ENCODE measurements at regions of chr15 and their contacts with region 1.

Region 1: DNA sequence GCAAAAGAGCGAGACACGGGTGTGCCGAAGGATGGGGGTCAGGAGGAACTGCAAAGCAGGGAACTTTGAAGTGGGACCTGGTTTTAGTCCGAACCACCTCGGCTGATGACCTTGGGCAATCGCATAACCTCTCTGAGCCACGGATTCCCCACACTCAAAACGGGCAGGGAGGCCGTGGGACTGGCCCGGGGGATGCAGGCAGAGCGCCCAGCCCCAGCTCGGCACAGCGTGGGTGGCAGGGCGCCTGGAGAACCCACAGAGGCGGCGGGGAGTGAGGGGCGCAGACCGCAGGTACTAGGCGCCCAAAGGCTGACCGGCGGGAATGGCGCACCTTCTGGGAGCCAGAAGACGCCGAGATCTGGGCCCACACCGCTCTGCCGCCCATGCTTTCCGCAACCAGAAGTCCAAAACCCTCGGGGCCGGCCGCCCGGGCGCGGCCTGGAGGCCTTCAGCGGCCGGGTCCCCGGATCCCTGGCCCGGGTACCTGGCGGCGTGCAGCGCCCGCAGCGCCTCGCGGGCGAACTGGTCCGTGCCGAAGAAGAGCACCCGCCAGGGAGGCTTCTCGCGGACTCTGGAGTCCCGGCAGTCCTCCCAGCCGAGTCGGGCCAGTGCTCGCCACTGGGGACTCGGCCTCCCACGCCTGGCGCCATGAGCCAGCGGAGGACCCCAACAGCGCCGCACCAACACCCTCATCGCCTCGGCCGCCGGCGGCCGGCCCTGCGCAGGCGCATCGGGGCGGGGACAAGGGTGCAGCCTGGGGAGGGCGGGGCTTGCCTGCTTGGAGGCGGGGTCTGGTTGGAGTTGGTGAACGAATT is at the start of gene MTFMT:
- DNase-seq: peak; percentile 77
- H3K4me3 ChIP-seq: peak within 1 kb of the TSS; percentile 66 to 89 (median 87)
- H3K27ac ChIP-seq: peak within 1 kb of the TSS; percentile 54
- H3K4me1 ChIP-seq: peaks cover 17% of the 10 kb centered on the region
- H3K27me3 ChIP-seq: no peaks in the 10 kb centered on the region
- CTCF ChIP-seq: peak in 1 of 2 donors; percentile 17
- total RNA-seq, gene MTFMT: 22.5 to 27.2 TPM

Region 2: GRCh38 chr15:65049418-65049840 is 20.3 kb after region 1 on chr15:
- CTCF ChIA-PET with region 1: interaction called, 15 read pairs
- dilution Hi-C with region 1: no loop called
- in situ Hi-C with region 1: no loop called
- intact Hi-C with region 1: loop called (anchors 1 kb)
- DNase-seq: peak; percentile 89
- H3K4me3 ChIP-seq: peak overlapping the region; percentile 11 to 45 (median 40)
- H3K27ac ChIP-seq: no peak overlapping the region
- H3K4me1 ChIP-seq: peaks cover 11% of the 10 kb centered on the region
- H3K27me3 ChIP-seq: no peaks in the 10 kb centered on the region
- CTCF ChIP-seq: no peak

Region 3: GRCh38 chr15:65086017-65086679 is 57.0 kb after region 1 on chr15:
- CTCF ChIA-PET with region 1: no interaction called
- dilution Hi-C with region 1: no loop called
- in situ Hi-C with region 1: no loop called
- intact Hi-C with region 1: loop called (anchors 1 kb)
- DNase-seq: peak; percentile 44
- H3K4me3 ChIP-seq: no peak overlapping the region
- H3K27ac ChIP-seq: no peak overlapping the region
- H3K4me1 ChIP-seq: peaks cover 37% of the 10 kb centered on the region
- H3K27me3 ChIP-seq: no peaks in the 10 kb centered on the region
- CTCF ChIP-seq: peak; percentile 64 to 69

Region 4: DNA sequence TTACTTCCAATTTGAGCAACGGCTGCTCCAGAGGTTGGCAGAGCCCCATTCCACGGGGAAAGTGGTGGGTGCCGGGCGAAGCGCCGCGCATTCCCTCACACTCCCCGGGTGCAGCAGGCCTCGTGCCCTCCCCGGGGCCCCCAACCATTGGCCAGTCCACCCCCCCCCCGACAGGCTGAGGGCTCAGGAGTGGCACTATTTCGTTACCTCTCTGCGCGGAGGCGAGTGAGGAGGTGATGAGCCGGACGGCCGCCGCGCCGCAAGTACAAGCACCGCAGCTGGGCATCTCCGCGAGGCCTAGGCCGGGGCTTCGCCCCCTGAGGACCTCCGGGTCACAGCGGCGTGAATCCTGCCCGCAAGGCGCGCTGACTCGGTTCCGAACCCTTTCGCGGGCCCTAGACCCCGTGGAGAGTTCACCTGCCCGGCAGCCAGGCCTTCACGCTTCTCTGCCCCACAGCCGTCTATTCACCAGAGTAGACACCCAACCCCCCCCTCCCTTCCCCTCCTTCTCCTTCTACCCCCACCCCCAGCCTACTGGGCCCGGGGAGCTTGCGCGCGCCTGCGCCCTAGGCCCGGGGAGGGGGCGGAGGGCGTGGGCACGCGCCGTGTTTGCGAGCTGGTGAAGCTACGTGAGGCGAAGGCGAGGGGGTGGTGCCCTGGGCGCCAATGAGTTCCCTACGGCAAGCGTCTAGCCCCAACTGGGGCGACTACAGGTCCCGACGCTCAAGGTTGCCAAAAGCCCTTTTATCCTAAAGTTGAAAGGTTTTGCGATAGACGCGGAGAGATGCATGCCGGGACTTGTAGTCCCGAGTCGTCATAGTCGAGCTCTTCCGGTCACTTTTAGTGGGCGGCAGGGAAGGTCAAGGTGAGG is 156.0 kb after region 1 on chr15 and contains the start of gene CLPX:
- CTCF ChIA-PET with region 1: interaction called, 9 read pairs
- dilution Hi-C with region 1: no loop called
- in situ Hi-C with region 1: no loop called
- intact Hi-C with region 1: loop called (anchors 1 kb)
- DNase-seq: peak; percentile 90
- H3K4me3 ChIP-seq: peak within 1 kb of the TSS; percentile 63 to 87 (median 66)
- H3K27ac ChIP-seq: peak within 1 kb of the TSS; percentile 73
- H3K4me1 ChIP-seq: no peaks in the 10 kb centered on the region
- H3K27me3 ChIP-seq: no peaks in the 10 kb centered on the region
- CTCF ChIP-seq: peak in 1 of 2 donors; percentile 3
- total RNA-seq, gene CLPX: 28.3 to 42.4 TPM

Region 5: DNA sequence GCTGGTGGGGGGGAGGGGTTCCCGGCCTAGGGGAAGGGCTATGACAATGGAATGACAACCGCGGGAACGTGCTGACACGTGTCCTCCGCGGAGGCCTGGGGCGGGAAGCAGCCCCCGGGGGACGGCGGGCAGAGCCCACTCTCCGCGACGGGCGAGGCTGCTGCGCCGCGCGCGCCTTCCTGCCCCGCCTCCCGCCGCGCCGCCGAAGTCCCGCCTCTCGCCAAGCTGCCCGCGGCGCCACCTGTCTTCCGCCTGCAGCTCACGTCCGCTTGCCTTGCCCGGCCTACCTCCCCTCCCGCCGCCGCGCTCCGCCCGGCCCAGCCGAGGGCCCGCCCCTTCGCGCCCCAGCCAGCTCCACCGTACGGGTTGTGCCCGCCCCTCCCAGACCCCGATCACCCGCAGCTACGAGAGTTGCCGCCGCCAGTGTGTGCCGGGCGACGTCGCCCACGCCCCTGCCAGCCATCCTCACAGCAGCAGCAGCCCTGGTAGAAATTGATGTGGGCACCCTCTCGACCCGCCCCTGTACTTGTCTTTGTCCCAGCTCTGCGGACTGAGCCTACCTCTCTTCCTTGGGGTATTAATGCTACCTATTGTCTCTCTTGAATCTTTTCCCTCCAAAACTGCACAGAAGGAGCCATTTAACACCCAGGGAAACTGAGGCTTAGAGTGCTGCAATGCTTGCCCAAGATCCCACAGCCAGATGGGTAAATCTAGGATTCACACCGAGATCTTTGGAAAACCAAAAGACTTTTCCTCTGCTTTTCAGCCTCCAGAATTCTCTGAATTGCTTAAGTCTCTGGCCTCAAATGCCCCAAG is 257.8 kb after region 1 on chr15 and contains the start of gene PARP16:
- CTCF ChIA-PET with region 1: no interaction called
- dilution Hi-C with region 1: no loop called
- in situ Hi-C with region 1: loop called (anchors 25 kb)
- intact Hi-C with region 1: no loop called
- DNase-seq: peak; percentile 83
- H3K4me3 ChIP-seq: peak within 1 kb of the TSS; percentile 57 to 78 (median 59)
- H3K27ac ChIP-seq: peak within 1 kb of the TSS; percentile 28
- H3K4me1 ChIP-seq: peaks cover 16% of the 10 kb centered on the region
- H3K27me3 ChIP-seq: no peaks in the 10 kb centered on the region
- CTCF ChIP-seq: peak in 1 of 2 donors; percentile 34
- total RNA-seq, gene PARP16: 4.9 to 5.2 TPM

Region 6: DNA sequence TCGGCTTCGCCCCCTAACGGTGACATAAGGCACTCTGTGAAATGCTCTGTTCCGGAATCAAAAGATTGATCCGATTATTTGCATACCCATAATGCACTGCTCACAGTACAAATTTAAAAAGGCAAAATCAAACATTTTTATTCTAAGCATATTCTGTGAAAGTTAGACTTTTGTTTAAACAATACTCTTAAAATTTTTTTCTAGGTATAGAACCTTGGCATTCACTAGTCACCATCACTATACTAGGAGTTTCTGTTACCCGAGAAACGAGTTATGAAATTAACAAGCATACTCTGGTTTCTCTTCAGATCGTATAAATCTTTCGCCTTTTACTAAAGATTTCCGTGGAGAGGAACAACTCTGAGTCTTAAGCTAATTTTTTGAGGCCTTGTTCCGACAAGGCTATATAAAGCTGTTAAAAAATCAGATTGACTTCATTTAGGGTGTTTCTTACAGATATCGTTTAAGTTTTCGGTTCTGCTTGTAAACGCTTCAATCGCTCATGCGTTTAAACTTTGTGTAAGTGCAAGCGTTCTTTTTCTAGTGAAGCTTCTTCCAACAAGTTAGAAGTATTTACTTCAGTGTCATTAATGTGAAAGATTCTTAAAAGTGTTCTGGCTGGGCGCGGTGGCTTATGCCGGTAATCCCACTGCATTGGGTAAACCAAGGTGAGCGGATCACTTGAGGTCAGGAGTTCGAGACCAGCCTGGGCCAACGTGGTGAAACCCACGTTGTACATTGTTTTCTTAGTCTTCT is 275.4 kb after region 1 on chr15 and contains the start of gene RNU5B-1:
- CTCF ChIA-PET with region 1: no interaction called
- dilution Hi-C with region 1: no loop called
- in situ Hi-C with region 1: loop called (anchors 25 kb)
- intact Hi-C with region 1: loop called (anchors 1 kb)
- DNase-seq: peak; percentile 70
- H3K4me3 ChIP-seq: peak within 1 kb of the TSS; percentile 40 to 90 (median 45)
- H3K27ac ChIP-seq: peak within 1 kb of the TSS; percentile 100
- H3K4me1 ChIP-seq: peaks cover 14% of the 10 kb centered on the region
- H3K27me3 ChIP-seq: no peaks in the 10 kb centered on the region
- CTCF ChIP-seq: peak; percentile 87 to 94
- total RNA-seq, gene RNU5B-1: not detected

Measured in mammary epithelial cell (primary cell).